ENCODE measurements at regions of chr5 and their contacts with region 1.

Region 1: GRCh38 chr5:136123236-136123768 is 9.3 kb upstream of the SMAD5 start:
- DNase-seq: peak; percentile 26
- ATAC-seq: peak; percentile 17; the same call in 1 of the 2 replicates
- H3K4me3 ChIP-seq: no peak overlapping the region
- H3K27ac ChIP-seq: no peak overlapping the region
- H3K4me1 ChIP-seq: no peaks in the 10 kb centered on the region
- H3K27me3 ChIP-seq: peaks cover 38% of the 10 kb centered on the region
- CTCF ChIP-seq: no peak
- POLR2A ChIP-seq: no peak
- RAD21 ChIP-seq: no peak

Region 2: DNA sequence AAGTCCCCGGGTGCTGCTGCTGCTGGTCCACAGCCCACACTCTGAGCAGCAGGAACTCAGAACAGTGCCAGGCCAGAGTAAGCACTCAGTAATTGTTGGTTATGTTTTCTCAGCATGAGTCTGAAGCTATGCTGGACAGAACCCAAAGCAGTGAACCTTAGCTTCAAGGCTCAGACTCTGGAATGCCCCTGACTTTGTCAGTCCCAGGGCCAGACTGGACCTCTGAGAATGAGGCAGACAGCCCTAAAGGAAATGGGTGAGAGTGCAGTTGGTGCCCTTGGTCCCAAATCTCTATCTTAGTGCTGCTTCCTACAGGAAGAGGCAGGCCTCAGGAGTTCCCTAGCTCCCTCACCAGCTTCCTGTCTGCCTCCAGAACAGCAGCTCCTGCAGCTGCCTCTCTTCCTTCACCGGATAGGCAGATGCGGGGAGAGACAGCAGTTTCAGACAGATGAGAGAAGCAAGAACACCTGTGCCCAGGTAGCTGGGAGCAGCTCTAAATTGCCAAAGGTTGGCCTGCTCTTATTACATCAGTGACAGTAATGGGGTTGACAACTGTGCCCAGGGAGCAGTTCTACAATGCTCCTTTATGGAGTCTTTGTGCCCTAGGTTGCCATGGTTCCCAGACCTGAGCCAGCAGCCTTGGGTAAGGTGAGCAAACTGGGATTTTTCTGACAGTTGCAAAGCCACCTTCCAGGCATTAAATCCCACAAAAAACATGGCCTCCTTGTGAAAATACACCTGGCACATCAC is 462.3 kb before region 1 on chr5:
- CTCF ChIA-PET with region 1: no interaction called
- POLR2A ChIA-PET with region 1: no interaction called
- dilution Hi-C with region 1: no loop called
- in situ Hi-C with region 1: loop called (anchors 25 kb)
- intact Hi-C with region 1: no loop called
- DNase-seq: no peak
- ATAC-seq: no peak; the same call in 1 of the 2 replicates
- H3K4me3 ChIP-seq: no peak overlapping the region
- H3K27ac ChIP-seq: no peak overlapping the region
- H3K4me1 ChIP-seq: no peaks in the 10 kb centered on the region
- H3K27me3 ChIP-seq: no peaks in the 10 kb centered on the region
- CTCF ChIP-seq: no peak
- POLR2A ChIP-seq: no peak
- RAD21 ChIP-seq: no peak

Measured in IMR-90 (cell line).